ENCODE measurements at regions of chr16 and their contacts with region 1.

Region 1: GRCh38 chr16:70770626-70771552 is 30.1 kb downstream of the VAC14 start:
- DNase-seq: peak; percentile 65 to 69
- H3K4me3 ChIP-seq: no peak overlapping the region
- H3K27ac ChIP-seq: no peak overlapping the region
- H3K4me1 ChIP-seq: peaks cover 0 to 5% of the 10 kb centered on the region in 2 donors
- H3K27me3 ChIP-seq: no peaks in the 10 kb centered on the region
- CTCF ChIP-seq: peak; percentile 89 to 96 (median 94)
- POLR2A ChIP-seq: no peak

Region 2: DNA sequence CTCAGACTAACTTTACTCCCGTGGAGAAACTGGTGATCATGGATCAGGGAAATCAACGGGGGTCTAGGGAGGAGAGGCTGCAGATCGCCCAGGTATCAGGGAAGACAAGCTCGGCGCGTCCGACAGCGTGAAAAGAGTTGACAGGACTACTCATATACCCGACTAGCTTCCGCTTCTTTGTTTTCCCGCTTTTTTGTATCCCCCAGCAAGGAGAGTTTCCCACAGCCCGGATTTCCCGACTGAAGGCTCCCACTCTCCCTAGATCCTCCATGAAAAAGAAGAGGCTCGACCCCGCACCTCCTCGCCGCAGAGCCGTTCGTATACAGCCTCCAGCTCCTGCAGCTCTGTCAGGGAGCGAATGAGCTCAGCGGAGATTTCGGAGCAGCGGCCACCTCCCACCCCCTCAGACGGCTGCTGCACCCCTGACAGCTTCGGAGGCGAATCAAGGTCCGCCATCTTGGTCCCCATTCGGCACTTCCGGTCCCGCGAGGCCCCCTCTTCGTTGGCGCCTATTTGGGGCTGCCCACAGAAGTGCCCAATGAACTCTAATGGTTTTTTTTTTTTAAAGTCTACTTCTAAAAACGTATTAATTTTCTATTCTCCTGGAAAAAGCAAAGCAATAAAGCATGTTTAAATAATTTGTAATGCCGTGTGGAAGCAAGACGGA is 247.7 kb before region 1 on chr16 and contains the start of gene COG4:
- intact Hi-C with region 1: loop called (anchors 10 kb)
- DNase-seq: peak; percentile 83 to 87
- H3K4me3 ChIP-seq: peak within 1 kb of the TSS; percentile 59 to 96 (median 94)
- H3K27ac ChIP-seq: peak within 1 kb of the TSS; percentile 89 to 93 (median 90)
- H3K4me1 ChIP-seq: peaks cover 13 to 30% of the 10 kb centered on the region in 2 donors
- H3K27me3 ChIP-seq: no peaks in the 10 kb centered on the region
- CTCF ChIP-seq: no peak
- POLR2A ChIP-seq: peak in 1 of 2 donors; percentile 44
- total RNA-seq, gene COG4: 39.6 to 88.4 (median 66.7) TPM

Region 3: DNA sequence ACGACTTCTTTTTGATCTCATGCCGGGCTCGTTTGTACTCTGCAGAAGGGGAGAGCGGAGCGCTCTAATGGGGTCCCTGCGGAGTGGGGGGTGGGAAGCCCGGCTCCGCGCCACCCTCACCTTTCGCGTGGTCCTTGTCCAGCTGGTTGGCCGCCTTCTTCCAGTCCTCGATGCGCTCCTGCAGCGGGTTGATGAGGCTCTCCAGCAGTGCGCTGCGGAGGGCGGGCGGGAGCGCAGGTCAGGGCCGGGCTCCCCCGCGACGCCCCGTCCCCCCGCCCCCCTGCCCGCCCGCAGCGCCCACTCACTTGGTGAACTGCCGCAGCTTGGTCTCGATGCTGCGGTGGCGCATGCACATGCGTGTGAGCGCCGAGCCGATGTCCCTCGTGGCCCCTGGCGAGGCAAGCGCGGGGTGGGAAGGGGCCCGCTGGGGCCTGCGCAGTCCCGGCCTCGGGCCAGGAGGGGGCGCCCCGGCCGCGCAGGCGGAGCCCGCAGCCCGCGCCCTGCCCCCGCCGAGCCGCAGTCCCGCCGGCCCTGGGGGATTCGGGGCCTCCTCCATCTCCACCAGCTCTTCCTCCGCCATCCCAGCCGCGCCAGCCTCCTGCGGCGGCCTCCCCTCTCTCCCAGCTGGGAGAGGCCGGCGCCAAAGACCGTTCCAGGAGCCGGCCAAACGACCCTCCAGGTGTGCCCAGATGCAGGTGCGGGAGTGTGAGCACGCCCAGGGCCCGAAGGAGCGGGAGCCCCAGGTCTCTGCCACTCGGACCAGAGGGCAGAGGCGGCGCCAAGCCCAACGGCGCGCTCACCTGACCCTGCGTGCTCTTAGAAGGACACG is 91.0 kb before region 1 on chr16:
- intact Hi-C with region 1: loop called (anchors 2 kb)
- DNase-seq: no peak
- H3K4me3 ChIP-seq: no peak overlapping the region
- H3K27ac ChIP-seq: no peak overlapping the region
- H3K4me1 ChIP-seq: peaks cover 17 to 33% of the 10 kb centered on the region in 2 donors
- H3K27me3 ChIP-seq: no peaks in the 10 kb centered on the region
- CTCF ChIP-seq: peak in 3 of 6 experiments; percentile 58 to 76 (median 64)
- POLR2A ChIP-seq: no peak

Measured in thyroid gland (tissue), 4 donors.